ENCODE measurements at regions of chr14 and their contacts with region 1.

Region 1: GRCh38 chr14:25006961-25007795 is 42.8 kb downstream of the STXBP6 start:
- DNase-seq: peak; percentile 95
- ATAC-seq: peak; percentile 82
- H3K4me3 ChIP-seq: no peak overlapping the region
- H3K27ac ChIP-seq: no peak overlapping the region
- H3K4me1 ChIP-seq: peaks cover 16% of the 10 kb centered on the region
- H3K27me3 ChIP-seq: no peaks in the 10 kb centered on the region
- CTCF ChIP-seq: no peak
- POLR2A ChIP-seq: no peak
- RAD21 ChIP-seq: 0 out of 2 replicates have a peak, but pooled peaks have one; percentile 4

Region 2: DNA sequence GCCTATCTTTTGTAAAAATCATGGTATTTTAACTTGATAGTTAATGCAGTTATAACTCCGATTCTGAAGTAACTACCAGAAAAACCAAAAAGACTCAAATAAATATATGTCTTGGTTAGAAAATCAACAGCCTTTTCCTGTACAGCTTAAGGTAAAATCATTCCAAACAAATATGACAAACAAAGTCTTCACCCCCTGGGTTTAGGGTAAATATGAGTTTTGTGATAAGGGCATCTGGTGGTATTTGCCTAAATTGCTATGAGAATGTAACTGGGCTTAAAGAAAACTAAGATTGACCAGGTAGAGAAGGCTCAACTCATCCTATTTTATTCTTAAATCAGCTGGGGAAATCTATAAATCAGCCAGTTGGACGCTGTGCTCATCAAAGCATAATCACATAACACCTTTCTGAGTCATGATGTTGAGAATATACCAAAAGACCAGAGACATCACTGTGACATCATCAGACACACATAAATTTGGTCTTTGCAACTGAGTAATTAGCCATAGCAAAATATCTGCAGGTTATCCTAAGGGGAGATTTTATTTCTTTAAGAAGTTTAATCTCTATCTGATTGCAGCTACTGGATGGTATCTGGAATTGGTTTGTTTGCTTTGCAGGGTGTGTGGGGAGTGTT is 91.1 kb before region 1 on chr14:
- CTCF ChIA-PET with region 1: no interaction called
- POLR2A ChIA-PET with region 1: no interaction called
- dilution Hi-C with region 1: no loop called
- in situ Hi-C with region 1: no loop called
- intact Hi-C with region 1: loop called (anchors 5 kb)
- DNase-seq: peak; percentile 16
- ATAC-seq: no peak
- H3K4me3 ChIP-seq: no peak overlapping the region
- H3K27ac ChIP-seq: no peak overlapping the region
- H3K4me1 ChIP-seq: peaks cover 4% of the 10 kb centered on the region; the same call in 1 of the 2 replicates
- H3K27me3 ChIP-seq: no peaks in the 10 kb centered on the region
- CTCF ChIP-seq: no peak
- POLR2A ChIP-seq: no peak
- RAD21 ChIP-seq: no peak